Ascending aorta (tissue), 2 donors: ENCODE measurements at regions of chr3 and their contacts with region 1.

Region 1: DNA sequence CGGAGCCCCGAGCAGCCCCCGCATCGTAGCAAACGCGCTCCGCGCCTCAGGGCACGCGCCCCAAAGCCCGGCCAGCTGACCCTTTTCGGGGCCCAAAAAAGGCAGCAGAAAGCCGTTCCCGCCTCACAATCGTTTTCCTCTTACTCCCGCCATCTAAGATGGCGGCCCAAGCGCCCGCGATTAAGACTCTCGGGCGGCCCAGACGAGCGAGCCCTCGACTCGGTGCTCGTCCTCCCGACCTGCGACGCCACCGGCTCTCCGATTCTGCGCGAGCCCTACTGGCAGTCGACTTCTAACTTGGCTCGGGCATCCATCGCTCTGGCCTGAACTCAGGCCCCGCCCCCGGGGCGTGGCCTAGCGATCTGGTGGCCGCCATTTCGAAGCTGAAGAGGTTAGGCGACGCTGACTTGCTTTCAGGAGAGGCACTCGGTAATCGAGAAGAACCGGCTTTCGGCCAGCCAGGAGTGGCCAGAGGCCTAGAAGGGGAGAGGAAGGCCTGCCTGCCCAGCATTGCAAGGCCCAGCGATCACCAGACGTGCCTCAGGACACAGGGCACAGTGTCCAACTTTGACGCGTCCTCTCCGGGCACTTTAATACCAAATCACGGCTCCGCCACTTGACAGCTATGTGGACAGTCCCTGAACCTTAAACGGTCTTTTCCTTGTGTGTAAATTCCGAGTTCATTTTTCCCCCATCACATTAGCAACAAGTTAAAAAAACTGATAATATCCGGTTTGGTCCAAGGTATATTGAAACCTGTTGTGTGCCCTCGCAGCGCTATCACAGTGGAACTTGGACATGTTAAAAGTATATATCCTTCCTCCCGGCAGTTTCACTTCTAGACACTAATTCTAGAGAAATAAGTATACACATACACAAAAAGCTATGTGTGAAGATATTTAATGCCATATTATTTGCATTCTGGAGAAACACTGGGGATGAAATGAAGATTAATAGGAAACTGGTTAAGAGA is at the start of gene RAF1:
- DNase-seq: peak; percentile 93 to 99
- H3K4me3 ChIP-seq: peak within 1 kb of the TSS; percentile 90 to 95
- H3K27ac ChIP-seq: peak within 1 kb of the TSS; percentile 99 to 100
- H3K4me1 ChIP-seq: peaks cover 6 to 21% of the 10 kb centered on the region in 2 donors
- H3K27me3 ChIP-seq: no peaks in the 10 kb centered on the region
- CTCF ChIP-seq: peak in 1 of 3 experiments; percentile 2
- total RNA-seq, gene RAF1: 103 TPM

Region 2: GRCh38 chr3:12556671-12557472 is 107.3 kb before region 1 on chr3 and contains the start of gene MKRN2:
- intact Hi-C with region 1: loop called (anchors 1 kb)
- DNase-seq: peak; percentile 33 to 92
- H3K4me3 ChIP-seq: peak within 1 kb of the TSS; percentile 61 to 99
- H3K27ac ChIP-seq: peak within 1 kb of the TSS; percentile 92 to 98
- H3K4me1 ChIP-seq: peaks cover 6 to 32% of the 10 kb centered on the region in 2 donors
- H3K27me3 ChIP-seq: no peaks in the 10 kb centered on the region
- CTCF ChIP-seq: no peak
- total RNA-seq, gene MKRN2: 25.2 TPM

Region 3: DNA sequence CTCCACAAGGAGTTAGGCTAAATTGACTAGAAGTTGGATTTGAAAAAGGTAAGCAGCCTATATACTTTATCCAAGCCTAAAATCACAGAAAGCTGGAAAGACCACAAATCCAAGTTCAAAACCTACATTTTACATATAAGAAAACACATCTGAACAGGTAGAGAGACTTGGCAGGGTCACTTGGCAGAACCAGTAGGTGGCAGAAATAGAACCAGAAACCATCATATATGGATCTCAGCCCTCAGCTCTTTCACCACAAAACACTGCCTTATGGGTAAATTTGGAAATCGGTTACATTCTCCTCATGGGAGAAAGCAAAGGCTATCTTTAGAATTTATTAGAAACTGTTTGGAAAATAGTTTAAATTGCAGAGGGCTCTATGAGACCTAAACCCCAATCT is 63.1 kb before region 1 on chr3:
- intact Hi-C with region 1: loop called (anchors 5 kb)
- DNase-seq: no peak
- H3K4me3 ChIP-seq: no peak overlapping the region
- H3K27ac ChIP-seq: peak overlapping the region; percentile 28 to 42
- H3K4me1 ChIP-seq: peaks cover 0 to 11% of the 10 kb centered on the region in 2 donors
- H3K27me3 ChIP-seq: no peaks in the 10 kb centered on the region
- CTCF ChIP-seq: peak in 1 of 3 experiments; percentile 29

Region 4: DNA sequence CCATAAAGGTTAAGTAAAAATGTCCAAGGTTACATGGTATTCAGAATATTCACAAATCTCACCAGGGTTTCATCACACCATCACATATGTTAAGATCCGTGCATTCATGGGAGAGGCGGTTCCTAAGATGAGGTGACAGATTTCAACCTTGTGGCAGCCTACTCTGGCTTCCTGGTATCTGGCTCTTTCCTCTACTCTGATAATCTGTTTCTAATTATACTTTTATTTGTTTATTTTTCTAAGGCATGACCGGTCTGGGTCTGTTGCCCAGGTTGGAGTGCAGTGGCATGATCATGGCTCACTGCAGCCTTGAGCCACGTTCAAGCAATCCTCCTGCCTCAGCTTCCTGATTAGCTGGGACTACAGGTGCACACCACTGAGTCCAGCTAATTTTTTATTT is 34.7 kb before region 1 on chr3:
- intact Hi-C with region 1: loop called (anchors 5 kb)
- DNase-seq: no peak
- H3K4me3 ChIP-seq: no peak overlapping the region
- H3K27ac ChIP-seq: peak overlapping the region; percentile 28 to 34
- H3K4me1 ChIP-seq: peaks cover 0 to 45% of the 10 kb centered on the region in 2 donors
- H3K27me3 ChIP-seq: no peaks in the 10 kb centered on the region
- CTCF ChIP-seq: no peak

Region 5: GRCh38 chr3:12687962-12688361 is 23.7 kb after region 1 on chr3:
- intact Hi-C with region 1: loop called (anchors 1 kb)
- DNase-seq: no peak
- H3K4me3 ChIP-seq: no peak overlapping the region
- H3K27ac ChIP-seq: no peak overlapping the region
- H3K4me1 ChIP-seq: no peaks in the 10 kb centered on the region
- H3K27me3 ChIP-seq: no peaks in the 10 kb centered on the region
- CTCF ChIP-seq: no peak

Region 6: DNA sequence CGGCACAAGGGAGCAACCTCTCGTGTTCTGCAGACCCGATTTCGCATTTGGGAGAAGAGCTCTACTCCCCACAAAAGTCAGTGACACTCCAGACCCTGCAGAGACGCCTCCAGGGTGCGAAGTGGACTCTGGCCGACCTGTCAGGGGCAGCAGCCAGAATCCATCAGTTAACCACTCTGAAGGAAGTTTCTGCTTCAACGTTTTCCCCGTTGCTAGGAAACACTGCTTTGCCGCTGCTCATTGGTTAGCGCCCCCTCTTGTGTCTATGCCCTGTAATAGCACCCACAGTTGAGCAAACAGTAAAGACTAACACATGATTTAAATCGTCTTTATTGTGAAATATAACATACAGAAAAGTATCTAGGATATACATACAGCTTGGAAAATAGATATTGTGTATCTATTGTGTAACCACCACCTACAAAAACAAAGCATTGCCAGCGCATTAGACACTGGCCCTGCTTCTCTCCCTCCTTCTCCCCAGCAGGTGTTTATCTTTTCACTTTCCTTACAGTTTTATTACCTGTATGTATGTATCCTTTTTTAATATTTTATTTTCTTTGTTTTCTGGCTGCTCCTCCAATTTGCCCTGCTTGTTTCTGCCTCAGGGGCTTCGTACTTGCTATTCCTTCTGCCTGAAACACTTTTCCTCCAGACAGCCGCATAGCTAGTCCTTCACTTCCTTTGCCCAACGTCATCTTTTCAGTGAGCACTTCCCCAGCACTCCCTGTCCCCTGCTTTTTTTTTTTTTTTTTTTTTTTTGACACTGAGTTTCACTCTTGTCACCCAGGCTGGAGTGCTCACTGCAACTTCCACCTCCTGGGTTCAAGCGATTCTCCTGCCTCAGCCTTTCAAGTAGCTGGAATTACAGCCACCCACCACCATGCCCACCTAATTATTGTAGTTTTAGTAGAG is 56.0 kb after region 1 on chr3:
- intact Hi-C with region 1: loop called (anchors 2 kb)
- DNase-seq: peak; percentile 33 to 90
- H3K4me3 ChIP-seq: peak overlapping the region; percentile 40 to 55
- H3K27ac ChIP-seq: peak overlapping the region in 1 of 2 donors; percentile 8
- H3K4me1 ChIP-seq: peaks cover 0 to 4% of the 10 kb centered on the region in 2 donors
- H3K27me3 ChIP-seq: no peaks in the 10 kb centered on the region
- CTCF ChIP-seq: peak; percentile 89 to 96 (median 90)

Region 7: GRCh38 chr3:12793701-12794100 is 129.5 kb after region 1 on chr3:
- intact Hi-C with region 1: no loop called
- DNase-seq: no peak
- H3K4me3 ChIP-seq: no peak overlapping the region
- H3K27ac ChIP-seq: no peak overlapping the region
- H3K4me1 ChIP-seq: peaks cover 3 to 12% of the 10 kb centered on the region in 2 donors
- H3K27me3 ChIP-seq: no peaks in the 10 kb centered on the region
- CTCF ChIP-seq: no peak

Region 8: DNA sequence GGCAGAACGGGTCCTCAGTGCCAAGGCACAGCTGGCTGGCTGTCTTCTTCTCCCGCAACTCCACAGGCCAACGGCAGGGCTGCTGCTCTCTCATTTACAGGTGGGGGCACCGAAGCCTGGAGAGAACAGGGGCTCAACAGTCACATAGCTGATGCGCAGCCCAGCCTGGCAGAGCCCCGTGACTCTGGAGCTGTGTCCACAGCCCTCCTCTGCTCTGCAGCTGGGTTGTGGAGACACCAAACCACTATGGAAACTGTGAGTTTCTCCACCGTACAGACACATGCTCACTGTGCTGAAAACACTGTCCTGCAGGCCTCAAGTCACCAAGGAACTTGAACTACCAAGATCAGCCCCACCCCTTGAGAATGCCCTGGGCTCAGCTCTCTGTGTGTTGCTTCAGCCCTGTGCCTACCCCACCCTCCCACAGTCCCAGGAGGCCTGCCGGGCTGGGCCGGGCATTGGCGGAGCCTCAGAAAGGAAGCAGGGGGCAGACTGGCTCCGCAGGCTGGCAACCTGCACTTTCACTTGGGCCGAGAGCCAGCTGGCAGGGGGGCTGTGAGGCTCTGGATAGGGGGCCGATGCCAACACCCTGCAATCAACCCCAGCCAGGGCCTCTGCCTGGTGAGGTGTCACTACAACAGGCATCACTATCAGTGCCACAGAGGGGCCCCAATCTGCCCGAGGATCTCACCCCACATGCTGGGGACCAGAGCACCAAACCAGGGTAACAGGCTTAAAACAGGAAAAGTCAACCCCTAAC is 290.8 kb after region 1 on chr3:
- intact Hi-C with region 1: loop called (anchors 10 kb)
- DNase-seq: peak; percentile 90 to 98
- H3K4me3 ChIP-seq: peak overlapping the region; percentile 1 to 11
- H3K27ac ChIP-seq: peak overlapping the region; percentile 89 to 92
- H3K4me1 ChIP-seq: peaks cover 49 to 87% of the 10 kb centered on the region in 2 donors
- H3K27me3 ChIP-seq: no peaks in the 10 kb centered on the region
- CTCF ChIP-seq: peak in 2 of 3 experiments; percentile 4 to 23